Endothelial cell of umbilical vein (primary cell): ENCODE measurements at regions of chr4 and their contacts with region 1.

Region 1: GRCh38 chr4:154807042-154807630 is 26.1 kb downstream of the RBM46 start:
- DNase-seq: peak; percentile 61
- H3K4me3 ChIP-seq: peak overlapping the region in 1 of 3 experiments; percentile 17
- H3K27ac ChIP-seq: no peak overlapping the region
- H3K4me1 ChIP-seq: peaks cover 2% of the 10 kb centered on the region
- H3K27me3 ChIP-seq: peaks cover 0 to 6% of the 10 kb centered on the region in 2 experiments
- CTCF ChIP-seq: peak; percentile 32 to 53
- POLR2A ChIP-seq: no peak

Region 2: GRCh38 chr4:154626793-154627484 is 180.2 kb before region 1 on chr4:
- CTCF ChIA-PET with region 1: no interaction called
- POLR2A ChIA-PET with region 1: no interaction called
- dilution Hi-C with region 1: no loop called
- intact Hi-C with region 1: no loop called
- DNase-seq: peak; percentile 46
- H3K4me3 ChIP-seq: no peak overlapping the region
- H3K27ac ChIP-seq: no peak overlapping the region
- H3K4me1 ChIP-seq: no peaks in the 10 kb centered on the region
- H3K27me3 ChIP-seq: peaks cover 16 to 23% of the 10 kb centered on the region in 2 experiments
- CTCF ChIP-seq: peak; percentile 45 to 84
- POLR2A ChIP-seq: no peak

Region 3: GRCh38 chr4:154818230-154818629 is 11.1 kb after region 1 on chr4:
- CTCF ChIA-PET with region 1: interaction called, 17 read pairs
- POLR2A ChIA-PET with region 1: no interaction called
- dilution Hi-C with region 1: no loop called
- intact Hi-C with region 1: no loop called
- DNase-seq: no peak
- H3K4me3 ChIP-seq: no peak overlapping the region
- H3K27ac ChIP-seq: no peak overlapping the region
- H3K4me1 ChIP-seq: no peaks in the 10 kb centered on the region
- H3K27me3 ChIP-seq: peaks cover 0 to 2% of the 10 kb centered on the region in 2 experiments
- CTCF ChIP-seq: no peak
- POLR2A ChIP-seq: no peak

Region 4: GRCh38 chr4:154928640-154929257 is 121.6 kb after region 1 on chr4:
- CTCF ChIA-PET with region 1: interaction called, 53 read pairs
- POLR2A ChIA-PET with region 1: no interaction called
- dilution Hi-C with region 1: no loop called
- intact Hi-C with region 1: loop called (anchors 1 kb)
- DNase-seq: peak; percentile 21
- H3K4me3 ChIP-seq: no peak overlapping the region
- H3K27ac ChIP-seq: no peak overlapping the region
- H3K4me1 ChIP-seq: no peaks in the 10 kb centered on the region
- H3K27me3 ChIP-seq: no peaks in the 10 kb centered on the region
- CTCF ChIP-seq: no peak
- POLR2A ChIP-seq: no peak

Region 5: DNA sequence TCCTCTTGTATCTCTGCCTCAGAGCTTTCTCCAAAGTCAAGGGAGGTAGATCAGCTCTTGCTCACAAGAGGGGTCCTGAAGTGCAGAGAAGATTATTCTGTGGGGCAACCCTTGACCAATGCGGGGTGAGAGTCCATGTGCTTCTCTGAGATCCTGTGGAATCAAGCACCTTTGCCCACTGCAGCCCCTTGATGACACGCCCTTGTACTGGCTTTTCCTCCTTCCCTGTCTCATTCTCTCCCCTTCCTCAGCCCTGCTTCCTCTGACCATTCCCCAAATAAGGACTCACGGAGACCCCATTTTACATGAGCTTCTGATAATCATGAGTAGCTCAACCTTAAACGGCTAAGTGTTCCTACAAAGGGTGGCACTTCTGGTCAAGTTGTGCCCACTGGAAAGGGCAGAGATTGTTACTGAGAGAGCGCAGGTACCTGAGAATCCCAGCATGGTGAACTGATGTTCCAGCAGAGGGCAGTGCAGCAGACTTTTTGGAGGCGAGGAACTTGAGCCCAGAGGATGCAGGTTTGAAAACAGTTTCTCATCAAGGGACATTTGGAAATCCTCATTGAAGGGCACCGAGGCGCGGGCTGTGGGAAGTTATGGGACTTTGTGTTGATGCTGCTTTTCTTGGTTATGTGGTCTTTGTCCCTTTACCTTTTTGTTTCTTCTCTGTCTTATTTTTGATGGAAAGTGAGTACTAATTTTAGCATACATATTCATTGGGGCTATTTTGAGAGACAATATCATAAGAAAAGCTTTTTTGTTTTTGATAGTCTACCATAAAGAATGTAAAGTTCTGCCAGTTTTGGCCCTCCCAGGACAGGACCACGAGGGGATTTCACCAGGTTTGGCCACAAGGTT is 175.3 kb after region 1 on chr4:
- CTCF ChIA-PET with region 1: interaction called, 4 read pairs
- POLR2A ChIA-PET with region 1: no interaction called
- dilution Hi-C with region 1: no loop called
- intact Hi-C with region 1: loop called (anchors 2 kb)
- DNase-seq: peak; percentile 61
- H3K4me3 ChIP-seq: no peak overlapping the region
- H3K27ac ChIP-seq: no peak overlapping the region
- H3K4me1 ChIP-seq: no peaks in the 10 kb centered on the region
- H3K27me3 ChIP-seq: peaks cover 0 to 4% of the 10 kb centered on the region in 2 experiments
- CTCF ChIP-seq: peak; percentile 64
- POLR2A ChIP-seq: no peak

Region 6: DNA sequence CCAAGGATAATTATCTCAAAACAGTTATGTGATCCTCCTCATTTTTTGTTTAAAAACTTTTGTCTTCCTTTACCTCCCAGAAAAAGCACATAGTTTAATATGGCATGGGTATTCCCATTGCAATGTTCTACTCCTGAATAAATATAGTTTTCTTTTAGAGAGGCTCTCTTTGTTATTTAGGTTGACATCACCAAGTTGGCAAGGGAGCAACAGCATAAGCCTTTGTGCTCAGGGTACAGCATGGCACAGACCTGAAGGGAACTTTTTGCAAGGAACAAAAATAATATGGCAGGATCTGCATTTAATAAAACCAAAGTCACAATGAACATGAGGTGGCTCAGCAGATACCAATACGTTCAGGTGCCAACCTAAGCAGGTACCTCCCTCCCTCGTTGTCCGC is 354.2 kb after region 1 on chr4:
- CTCF ChIA-PET with region 1: no interaction called
- POLR2A ChIA-PET with region 1: no interaction called
- dilution Hi-C with region 1: no loop called
- intact Hi-C with region 1: no loop called
- DNase-seq: no peak
- H3K4me3 ChIP-seq: no peak overlapping the region
- H3K27ac ChIP-seq: no peak overlapping the region
- H3K4me1 ChIP-seq: no peaks in the 10 kb centered on the region
- H3K27me3 ChIP-seq: no peaks in the 10 kb centered on the region
- CTCF ChIP-seq: no peak
- POLR2A ChIP-seq: no peak

Region 7: DNA sequence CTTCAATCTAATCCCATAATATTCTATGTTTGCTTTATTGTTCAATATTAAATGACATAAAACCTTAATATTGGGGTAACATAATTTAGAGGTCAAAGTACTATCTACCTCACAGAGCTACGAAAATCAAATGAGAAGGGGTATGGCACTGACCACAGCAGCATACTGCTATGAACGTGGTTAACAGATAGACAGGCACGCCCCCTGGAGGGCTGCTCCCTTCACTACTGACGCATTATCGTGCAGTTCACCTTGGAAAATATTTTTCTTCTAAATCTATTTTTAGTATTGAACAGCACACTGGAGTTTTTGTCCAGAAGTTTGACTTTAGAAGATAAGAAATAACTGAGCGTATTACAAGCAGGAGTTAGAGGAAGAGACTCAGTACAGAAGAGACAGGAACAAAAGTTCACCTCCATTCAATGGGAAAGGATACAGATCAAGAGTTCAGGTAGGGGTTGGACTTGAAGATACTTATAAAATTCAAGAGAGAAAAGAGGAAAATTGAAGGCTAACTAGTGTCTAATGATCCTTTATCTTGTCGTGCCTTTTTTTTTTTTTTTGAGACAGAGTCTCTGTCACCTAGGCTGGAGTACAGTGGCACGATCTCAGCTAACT is 546.9 kb after region 1 on chr4:
- CTCF ChIA-PET with region 1: interaction called, 29 read pairs
- POLR2A ChIA-PET with region 1: no interaction called
- dilution Hi-C with region 1: no loop called
- intact Hi-C with region 1: loop called (anchors 1 kb)
- DNase-seq: peak; percentile 76
- H3K4me3 ChIP-seq: no peak overlapping the region
- H3K27ac ChIP-seq: no peak overlapping the region
- H3K4me1 ChIP-seq: no peaks in the 10 kb centered on the region
- H3K27me3 ChIP-seq: no peaks in the 10 kb centered on the region
- CTCF ChIP-seq: peak; percentile 82 to 83
- POLR2A ChIP-seq: no peak

Region 8: GRCh38 chr4:155371432-155372043 is 564.4 kb after region 1 on chr4:
- CTCF ChIA-PET with region 1: interaction called, 75 read pairs
- POLR2A ChIA-PET with region 1: no interaction called
- dilution Hi-C with region 1: no loop called
- intact Hi-C with region 1: loop called (anchors 1 kb)
- DNase-seq: peak; percentile 38
- H3K4me3 ChIP-seq: no peak overlapping the region
- H3K27ac ChIP-seq: no peak overlapping the region
- H3K4me1 ChIP-seq: peaks cover 4% of the 10 kb centered on the region
- H3K27me3 ChIP-seq: peaks cover 0 to 6% of the 10 kb centered on the region in 2 experiments
- CTCF ChIP-seq: peak in 1 of 2 donors; percentile 17
- POLR2A ChIP-seq: no peak

Region 9: GRCh38 chr4:155376387-155377268 is 569.5 kb after region 1 on chr4 and contains the start of gene MAP9:
- CTCF ChIA-PET with region 1: interaction called, 75 read pairs
- POLR2A ChIA-PET with region 1: no interaction called
- dilution Hi-C with region 1: no loop called
- intact Hi-C with region 1: loop called (anchors 1 kb)
- DNase-seq: peak; percentile 38
- H3K4me3 ChIP-seq: peak within 1 kb of the TSS; percentile 7 to 59 (median 40)
- H3K27ac ChIP-seq: no peak within 1 kb of the TSS
- H3K4me1 ChIP-seq: peaks cover 4% of the 10 kb centered on the region
- H3K27me3 ChIP-seq: peaks cover 4 to 6% of the 10 kb centered on the region in 2 experiments
- CTCF ChIP-seq: no peak
- POLR2A ChIP-seq: no peak
- total RNA-seq, gene MAP9: 1.1 and 1.3 TPM in 2 replicates